ENCODE measurements at regions of chr2 and their contacts with region 1.

Region 1: GRCh38 chr2:7812231-7812995 is 869.4 kb upstream of the ID2 start:
- DNase-seq: peak; percentile 56
- H3K4me3 Mint-ChIP-seq: no peak overlapping the region
- H3K27ac Mint-ChIP-seq: peak overlapping the region; percentile 77
- H3K4me1 Mint-ChIP-seq: peaks cover 28% of the 10 kb centered on the region
- H3K27me3 Mint-ChIP-seq: no peaks in the 10 kb centered on the region
- CTCF ChIP-seq: no peak

Region 2: DNA sequence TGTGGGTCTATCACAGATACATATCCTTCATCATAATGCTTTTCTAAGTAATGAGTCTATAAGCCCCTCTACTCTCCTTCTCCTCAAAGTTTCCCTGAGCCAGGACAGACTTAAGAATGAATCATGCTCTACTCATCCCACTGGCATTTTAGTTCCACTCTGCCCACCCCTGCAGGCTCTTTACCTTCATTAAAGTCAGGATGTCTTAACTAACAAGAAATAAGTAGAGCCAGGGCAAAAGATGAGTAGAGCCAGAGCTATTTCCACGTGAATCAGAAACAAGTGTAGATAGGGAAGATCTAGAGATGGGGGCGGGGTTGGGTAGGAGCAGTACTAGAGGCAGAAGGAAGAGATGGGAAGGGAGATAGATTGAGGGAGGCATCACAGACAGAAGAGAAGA is 104.7 kb before region 1 on chr2:
- CTCF ChIA-PET with region 1: no interaction called
- POLR2A ChIA-PET with region 1: no interaction called
- intact Hi-C with region 1: loop called (anchors 1 kb)
- DNase-seq: peak; percentile 51
- H3K4me3 Mint-ChIP-seq: no peak overlapping the region
- H3K27ac Mint-ChIP-seq: peak overlapping the region; percentile 54
- H3K4me1 Mint-ChIP-seq: peaks cover 17% of the 10 kb centered on the region
- H3K27me3 Mint-ChIP-seq: no peaks in the 10 kb centered on the region
- CTCF ChIP-seq: no peak